Activated B cell treated with CpG ODN at 0.5 μM for 24 hours (primary cell): ENCODE measurements at regions of chr21 and their contacts with region 1.

Region 1: DNA sequence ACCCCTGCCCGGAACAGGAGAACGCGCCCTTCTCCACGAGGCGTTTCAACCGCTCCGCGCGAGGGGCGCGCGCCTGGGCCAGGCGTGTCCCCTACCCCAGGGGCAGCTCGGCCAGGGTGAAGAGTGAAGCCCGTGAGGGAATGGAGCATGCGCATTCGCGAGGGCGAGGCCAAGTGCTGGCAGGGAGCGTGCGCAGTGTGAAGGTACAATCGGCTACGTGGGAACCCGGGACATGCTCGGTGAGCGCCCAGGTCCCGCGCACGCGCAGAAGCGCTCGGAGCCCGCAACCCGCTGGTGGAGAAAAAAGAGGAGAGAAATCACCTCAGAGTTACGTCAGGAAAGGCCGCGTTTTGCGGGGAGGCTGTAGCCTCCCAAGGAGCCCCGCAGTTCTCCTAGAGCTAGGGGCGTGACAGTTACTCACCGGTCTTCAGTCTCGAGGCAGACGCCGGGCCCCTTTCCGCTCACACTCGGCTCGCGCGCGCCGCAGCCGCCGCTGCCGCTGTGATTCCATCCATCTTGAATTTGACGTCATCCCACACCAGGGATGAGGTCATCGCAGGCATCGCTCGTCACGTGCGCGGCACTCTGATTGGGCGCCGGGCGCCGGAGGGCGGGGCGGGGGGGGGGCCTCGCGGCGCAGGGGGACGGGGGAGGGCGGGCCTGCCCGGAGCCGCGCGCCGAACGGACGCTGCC is at the start of gene ZBTB21:
- DNase-seq: peak; percentile 97
- ATAC-seq: peak; percentile 79
- H3K4me3 Mint-ChIP-seq: peak within 1 kb of the TSS; percentile 98
- H3K27ac Mint-ChIP-seq: peak within 1 kb of the TSS; percentile 100
- H3K4me1 Mint-ChIP-seq: peaks cover 36% of the 10 kb centered on the region
- H3K27me3 Mint-ChIP-seq: no peaks in the 10 kb centered on the region
- CTCF ChIP-seq: no peak
- total RNA-seq, gene ZBTB21: 24.2 and 25.4 TPM in 2 replicates

Region 2: DNA sequence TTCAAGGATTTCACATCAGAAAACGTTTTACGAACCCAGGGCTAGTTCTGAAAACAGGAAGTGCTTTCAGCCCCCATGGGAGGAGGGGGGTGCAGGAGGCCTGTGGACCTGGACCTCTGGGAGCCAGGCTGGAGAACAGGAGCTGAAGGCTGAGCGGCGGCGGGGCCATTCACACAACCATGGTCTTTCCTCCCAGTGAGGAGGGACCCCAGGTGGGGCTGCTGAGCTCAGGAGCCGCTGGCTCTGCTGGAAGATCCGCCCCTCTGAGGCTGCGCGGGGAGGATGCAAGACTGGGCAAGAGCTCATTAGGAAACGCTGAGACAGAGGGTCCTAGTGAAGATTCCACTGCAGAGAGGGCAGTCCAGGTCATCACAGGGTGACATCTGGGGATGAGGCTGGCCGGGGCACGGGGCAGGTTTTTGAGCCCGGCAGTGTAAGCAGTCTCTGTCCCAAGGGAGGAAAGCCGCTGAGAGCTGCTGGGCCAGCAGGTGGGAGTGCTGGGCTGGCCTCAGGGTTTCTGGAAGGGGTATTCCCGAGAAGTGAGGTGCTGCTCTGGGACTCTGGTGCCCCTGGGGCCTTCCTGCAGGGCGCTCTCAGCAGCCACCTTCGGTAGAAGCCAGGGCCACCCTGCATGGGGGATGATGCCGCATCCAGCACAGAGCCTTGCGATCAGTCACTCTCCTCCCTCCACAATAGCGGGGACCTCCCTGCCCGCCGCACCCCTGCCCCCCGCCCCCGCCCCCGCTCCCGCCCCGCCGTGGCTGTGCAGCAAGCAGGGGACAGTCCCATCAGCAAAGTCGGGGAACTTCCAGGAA is 640.7 kb before region 1 on chr21:
- CTCF ChIA-PET with region 1: no interaction called
- POLR2A ChIA-PET with region 1: interaction called, 3 read pairs
- intact Hi-C with region 1: loop called (anchors 5 kb)
- DNase-seq: peak; percentile 51
- ATAC-seq: peak; percentile 47
- H3K4me3 Mint-ChIP-seq: peak overlapping the region; percentile 71
- H3K27ac Mint-ChIP-seq: peak overlapping the region; percentile 85
- H3K4me1 Mint-ChIP-seq: peaks cover 72% of the 10 kb centered on the region
- H3K27me3 Mint-ChIP-seq: no peaks in the 10 kb centered on the region
- CTCF ChIP-seq: no peak

Region 3: GRCh38 chr21:41926117-41926806 is 83.7 kb before region 1 on chr21:
- CTCF ChIA-PET with region 1: no interaction called
- POLR2A ChIA-PET with region 1: interaction called, 14 read pairs
- intact Hi-C with region 1: loop called (anchors 2 kb)
- DNase-seq: no peak
- ATAC-seq: peak; percentile 60
- H3K4me3 Mint-ChIP-seq: peak overlapping the region; percentile 90
- H3K27ac Mint-ChIP-seq: peak overlapping the region; percentile 98
- H3K4me1 Mint-ChIP-seq: peaks cover 90% of the 10 kb centered on the region
- H3K27me3 Mint-ChIP-seq: no peaks in the 10 kb centered on the region
- CTCF ChIP-seq: no peak

Region 4: GRCh38 chr21:42107881-42108553 is 98.0 kb after region 1 on chr21:
- CTCF ChIA-PET with region 1: interaction called, 14 read pairs
- POLR2A ChIA-PET with region 1: interaction called, 20 read pairs
- intact Hi-C with region 1: loop called (anchors 1 kb)
- DNase-seq: peak; percentile 55
- ATAC-seq: peak; percentile 88
- H3K4me3 Mint-ChIP-seq: peak overlapping the region; percentile 65
- H3K27ac Mint-ChIP-seq: peak overlapping the region; percentile 61
- H3K4me1 Mint-ChIP-seq: peaks cover 28% of the 10 kb centered on the region
- H3K27me3 Mint-ChIP-seq: no peaks in the 10 kb centered on the region
- CTCF ChIP-seq: no peak

Region 5: DNA sequence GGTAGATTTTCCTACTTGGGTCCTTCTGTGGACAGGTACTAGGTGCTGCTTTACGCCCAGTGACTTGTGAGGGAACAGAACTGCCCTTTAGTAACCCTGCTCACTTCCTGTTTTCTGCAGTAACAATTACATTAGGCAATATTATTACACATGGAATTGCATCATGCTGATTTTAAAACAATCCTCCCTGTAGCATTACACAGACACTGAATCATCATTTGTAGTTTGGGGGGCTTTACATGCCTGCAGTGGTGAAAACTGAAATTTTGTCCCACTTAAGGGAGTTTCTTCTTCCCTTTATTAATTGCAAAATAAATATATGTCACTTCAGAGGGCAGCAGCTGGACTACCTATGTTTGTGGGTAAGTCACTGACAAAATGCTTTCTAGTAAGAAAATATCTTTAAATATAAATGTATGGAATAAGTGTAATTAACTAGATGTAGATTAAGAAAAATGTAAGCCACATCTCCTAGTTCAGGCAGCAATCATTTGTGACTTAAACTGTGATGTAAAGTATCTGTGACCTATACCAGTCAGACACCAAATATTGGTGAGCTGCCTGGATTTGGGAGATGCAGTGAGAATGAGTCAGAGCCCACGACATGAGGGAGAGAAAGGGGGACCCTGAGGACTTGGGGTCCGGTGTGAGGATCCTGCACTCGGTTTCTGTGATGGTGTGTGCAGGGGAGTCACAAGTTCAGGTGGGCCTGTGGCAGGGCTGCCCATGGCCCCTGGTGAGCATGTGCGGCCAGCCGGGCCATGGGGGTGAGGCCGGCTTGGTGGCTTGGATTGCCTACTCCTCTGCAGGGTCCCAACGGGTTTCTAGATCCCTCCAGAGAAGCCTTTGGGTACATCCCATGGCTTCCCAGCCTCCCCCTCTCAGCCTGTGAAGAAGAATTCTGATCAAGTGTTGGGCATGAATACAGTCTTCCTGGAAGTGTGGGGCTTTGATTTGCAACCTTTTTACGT is 189.8 kb after region 1 on chr21:
- CTCF ChIA-PET with region 1: no interaction called
- POLR2A ChIA-PET with region 1: no interaction called
- intact Hi-C with region 1: no loop called
- DNase-seq: no peak
- ATAC-seq: peak; percentile 84
- H3K4me3 Mint-ChIP-seq: peak overlapping the region; percentile 46
- H3K27ac Mint-ChIP-seq: no peak overlapping the region
- H3K4me1 Mint-ChIP-seq: peaks cover 26% of the 10 kb centered on the region
- H3K27me3 Mint-ChIP-seq: no peaks in the 10 kb centered on the region
- CTCF ChIP-seq: no peak

Region 6: GRCh38 chr21:42467140-42467983 is 457.4 kb after region 1 on chr21:
- CTCF ChIA-PET with region 1: no interaction called
- POLR2A ChIA-PET with region 1: no interaction called
- intact Hi-C with region 1: loop called (anchors 10 kb)
- DNase-seq: peak; percentile 13
- ATAC-seq: no peak
- H3K4me3 Mint-ChIP-seq: peak overlapping the region; percentile 6
- H3K27ac Mint-ChIP-seq: no peak overlapping the region
- H3K4me1 Mint-ChIP-seq: peaks cover 69% of the 10 kb centered on the region
- H3K27me3 Mint-ChIP-seq: peaks cover 3% of the 10 kb centered on the region
- CTCF ChIP-seq: no peak